ENCODE measurements at regions of chr6 and their contacts with region 1.

Region 1: GRCh38 chr6:30541515-30542403 is 14.5 kb downstream of the GNL1 start:
- DNase-seq: peak; percentile 66 to 84 (median 81)
- ATAC-seq: peak; percentile 75 to 77
- H3K4me3 ChIP-seq: peak overlapping the region; percentile 28
- H3K27ac ChIP-seq: peak overlapping the region; percentile 9
- H3K4me1 ChIP-seq: no peaks in the 10 kb centered on the region
- H3K27me3 ChIP-seq: no peaks in the 10 kb centered on the region

Region 2: GRCh38 chr6:30411515-30412207 is 130.1 kb before region 1 on chr6:
- intact Hi-C with region 1: no loop called
- DNase-seq: peak; percentile 45 to 81 (median 75)
- ATAC-seq: peak in 1 of 2 donors; percentile 48
- H3K4me3 ChIP-seq: no peak overlapping the region
- H3K27ac ChIP-seq: no peak overlapping the region
- H3K4me1 ChIP-seq: no peaks in the 10 kb centered on the region
- H3K27me3 ChIP-seq: no peaks in the 10 kb centered on the region

Region 3: DNA sequence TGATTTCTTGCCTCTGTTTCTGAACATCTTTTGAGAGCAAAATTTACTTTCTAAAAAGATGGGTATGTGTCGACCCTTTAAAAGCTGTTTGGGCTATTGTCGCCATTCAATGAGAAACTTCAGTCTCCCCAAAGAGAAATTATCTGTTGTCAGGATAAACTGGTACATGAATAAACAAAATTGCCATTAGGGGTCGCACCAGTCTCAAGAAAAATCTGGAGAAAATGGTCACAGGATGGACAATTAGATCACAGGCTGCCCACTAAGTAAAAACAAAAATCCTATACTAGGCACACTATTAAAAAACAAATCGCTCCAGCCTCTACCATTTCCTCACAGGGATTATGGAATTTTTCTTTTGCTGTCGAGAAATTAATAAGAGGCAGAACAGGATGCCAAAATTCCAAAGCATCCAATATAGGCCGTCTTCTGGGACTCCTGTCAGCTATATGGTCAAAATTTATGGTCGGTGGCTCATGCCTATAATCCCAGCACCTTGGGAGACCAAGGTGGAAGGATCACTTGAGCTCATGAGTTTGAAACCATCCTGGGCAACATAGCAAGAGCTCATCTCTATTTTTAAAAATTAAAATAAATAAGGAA is 58.0 kb before region 1 on chr6:
- intact Hi-C with region 1: loop called (anchors 5 kb)
- DNase-seq: no peak
- ATAC-seq: peak; percentile 17 to 33
- H3K4me3 ChIP-seq: no peak overlapping the region
- H3K27ac ChIP-seq: no peak overlapping the region
- H3K4me1 ChIP-seq: no peaks in the 10 kb centered on the region
- H3K27me3 ChIP-seq: peaks cover 2% of the 10 kb centered on the region

Region 4: DNA sequence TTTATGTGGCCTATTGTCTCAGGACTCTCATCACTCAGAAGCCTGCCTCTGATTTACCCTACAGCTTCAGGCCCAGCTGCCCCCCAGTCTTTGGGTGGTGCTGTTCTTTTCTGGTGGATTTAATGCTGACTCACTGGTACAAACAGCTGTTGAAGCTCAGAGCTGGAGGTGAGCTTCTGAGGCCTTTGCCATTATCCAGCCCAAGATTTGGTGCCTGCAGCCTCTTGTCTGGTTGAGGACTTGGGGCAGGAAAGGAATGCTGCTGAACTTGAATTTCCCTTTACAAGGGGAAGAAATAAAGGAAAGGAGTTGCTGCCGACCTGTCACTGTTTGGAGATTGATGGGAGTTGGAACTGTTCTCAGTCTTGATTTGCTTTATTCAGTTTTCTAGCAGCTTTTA is 49.2 kb after region 1 on chr6:
- intact Hi-C with region 1: loop called in 1 of 4 experiments (anchors 10 kb)
- DNase-seq: no peak
- ATAC-seq: no peak
- H3K4me3 ChIP-seq: no peak overlapping the region
- H3K27ac ChIP-seq: no peak overlapping the region
- H3K4me1 ChIP-seq: no peaks in the 10 kb centered on the region
- H3K27me3 ChIP-seq: no peaks in the 10 kb centered on the region

Region 5: GRCh38 chr6:30600451-30600961 is 58.7 kb after region 1 on chr6:
- intact Hi-C with region 1: loop called in 2 of 4 experiments (anchors 5 to 10 kb)
- DNase-seq: peak in 2 of 3 donors; percentile 50 to 76
- ATAC-seq: peak in 1 of 2 donors; percentile 6
- H3K4me3 ChIP-seq: no peak overlapping the region
- H3K27ac ChIP-seq: no peak overlapping the region
- H3K4me1 ChIP-seq: no peaks in the 10 kb centered on the region
- H3K27me3 ChIP-seq: no peaks in the 10 kb centered on the region

Measured in right cardiac atrium (tissue), 5 donors.